ENCODE measurements at regions of chr17 and their contacts with region 1.

Region 1: GRCh38 chr17:65181237-65182061 is 44.3 kb downstream of the RGS9 start:
- DNase-seq: peak; percentile 79
- CTCF ChIP-seq: no peak

Region 2: DNA sequence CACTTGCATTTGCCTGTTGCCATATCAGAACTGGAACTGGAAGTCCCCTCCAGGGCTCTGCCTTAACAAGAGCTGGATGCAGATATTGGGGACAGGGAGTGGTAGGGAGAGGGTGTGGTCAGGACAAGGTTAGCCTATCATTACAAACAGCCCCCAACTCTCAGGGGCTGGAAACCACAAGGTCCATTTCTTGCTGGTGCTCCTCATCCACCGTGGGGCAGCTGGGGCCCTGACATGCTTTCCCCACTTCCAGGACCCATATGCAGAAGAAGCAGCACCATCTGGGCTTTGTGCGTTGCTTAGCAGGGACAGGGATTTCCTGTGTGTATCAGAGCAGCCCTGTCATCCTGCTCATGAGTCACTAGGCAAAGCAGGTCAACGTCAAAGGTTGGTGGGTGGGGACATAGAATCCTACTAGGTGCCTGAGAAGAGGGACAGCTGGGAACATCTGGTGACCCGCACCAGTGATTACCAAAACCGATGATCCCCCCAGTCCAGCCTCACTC is 17.4 kb before region 1 on chr17:
- CTCF ChIA-PET with region 1: interaction called, 6 read pairs
- POLR2A ChIA-PET with region 1: interaction called, 11 read pairs
- DNase-seq: peak; percentile 65
- CTCF ChIP-seq: no peak

Region 3: GRCh38 chr17:65198653-65199382 is 17.4 kb after region 1 on chr17:
- CTCF ChIA-PET with region 1: interaction called, 57 read pairs
- POLR2A ChIA-PET with region 1: no interaction called
- DNase-seq: peak; percentile 80
- CTCF ChIP-seq: peak; percentile 45

Region 4: GRCh38 chr17:65370669-65371131 is 189.3 kb after region 1 on chr17:
- CTCF ChIA-PET with region 1: no interaction called
- POLR2A ChIA-PET with region 1: no interaction called
- DNase-seq: no peak
- CTCF ChIP-seq: no peak